Activated T-helper 1 cell treated with anti-CD3 and anti-CD28 coated beads, Interleukin-12 subunit alpha, Interleukin-12 subunit beta, Interleukin-2, Interleukin-4 antibody, amounts not matched to agents 30 ng/mL and 10 ng/mL and 1 ng/mL, durations not matched to agents 14 hours and 24 hours and 36 hours (primary cell): ENCODE measurements at regions of chr5 and their contacts with region 1.

Region 1: DNA sequence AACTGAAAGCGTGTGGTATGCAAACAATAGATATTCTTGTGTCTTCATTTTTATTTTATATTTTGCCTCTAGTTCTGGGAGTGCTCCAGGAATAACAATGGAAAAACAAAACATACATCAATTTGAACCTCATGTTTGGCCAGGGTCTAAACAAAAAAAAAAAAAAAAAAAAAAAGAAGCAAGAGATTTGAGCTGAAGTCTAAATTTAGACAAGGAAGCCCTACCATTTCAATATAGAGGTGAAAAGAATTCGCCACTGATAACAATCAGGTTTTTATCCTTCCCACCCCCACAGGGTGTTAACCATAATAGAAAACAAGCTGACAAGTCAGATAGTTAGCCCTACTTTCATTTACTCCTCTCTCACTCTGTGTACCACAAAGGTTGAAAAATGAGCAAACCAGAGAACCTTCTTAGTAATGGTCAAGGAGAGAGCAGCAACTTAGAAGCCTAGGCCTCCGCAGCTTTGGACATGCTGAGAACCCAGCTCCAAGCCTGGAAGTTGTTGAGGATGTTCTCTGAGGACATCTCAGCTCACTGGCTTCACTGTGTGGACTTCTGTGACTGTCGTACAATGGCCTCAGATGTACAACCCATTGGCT is 118.2 kb upstream of the HMHB1 start:
- DNase-seq: no peak
- H3K4me3 Mint-ChIP-seq: no peak overlapping the region
- H3K27ac Mint-ChIP-seq: peak overlapping the region; percentile 58
- H3K4me1 Mint-ChIP-seq: peaks cover 44% of the 10 kb centered on the region
- H3K27me3 Mint-ChIP-seq: no peaks in the 10 kb centered on the region

Region 2: GRCh38 chr5:143002459-143003328 is 691.1 kb before region 1 on chr5:
- intact Hi-C with region 1: loop called (anchors 5 kb)
- DNase-seq: peak; percentile 66
- H3K4me3 Mint-ChIP-seq: peak overlapping the region; percentile 75
- H3K27ac Mint-ChIP-seq: peak overlapping the region; percentile 98
- H3K4me1 Mint-ChIP-seq: peaks cover 89% of the 10 kb centered on the region
- H3K27me3 Mint-ChIP-seq: no peaks in the 10 kb centered on the region

Region 3: GRCh38 chr5:143222287-143223231 is 471.2 kb before region 1 on chr5:
- intact Hi-C with region 1: loop called (anchors 10 kb)
- DNase-seq: peak; percentile 59
- H3K4me3 Mint-ChIP-seq: peak overlapping the region; percentile 60
- H3K27ac Mint-ChIP-seq: peak overlapping the region; percentile 92
- H3K4me1 Mint-ChIP-seq: peaks cover 77% of the 10 kb centered on the region
- H3K27me3 Mint-ChIP-seq: no peaks in the 10 kb centered on the region

Region 4: GRCh38 chr5:143605403-143606005 is 88.2 kb before region 1 on chr5:
- intact Hi-C with region 1: loop called (anchors 2 kb)
- DNase-seq: peak; percentile 25
- H3K4me3 Mint-ChIP-seq: peak overlapping the region; percentile 56
- H3K27ac Mint-ChIP-seq: peak overlapping the region; percentile 91
- H3K4me1 Mint-ChIP-seq: peaks cover 38% of the 10 kb centered on the region
- H3K27me3 Mint-ChIP-seq: no peaks in the 10 kb centered on the region

Region 5: DNA sequence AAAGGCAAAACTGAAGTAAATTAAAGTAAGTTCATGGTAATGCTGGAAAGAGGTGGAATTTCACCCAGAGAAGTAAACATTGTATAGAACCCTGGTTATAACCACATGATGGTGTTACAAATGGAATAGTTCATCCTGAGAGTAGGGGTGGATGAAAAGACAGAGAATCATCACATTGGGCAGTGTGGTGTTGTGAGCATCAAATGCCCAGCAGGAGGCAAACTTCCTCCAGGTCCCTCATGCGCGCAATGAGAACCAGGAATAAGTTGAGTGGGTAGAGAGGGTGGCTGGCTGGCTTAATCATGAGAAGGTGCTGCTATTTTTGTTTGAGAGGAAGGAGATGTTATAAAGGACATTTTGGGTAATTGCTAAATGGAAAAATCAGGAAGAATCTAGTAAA is 45.1 kb before region 1 on chr5:
- intact Hi-C with region 1: loop called (anchors 2 kb)
- DNase-seq: no peak
- H3K4me3 Mint-ChIP-seq: no peak overlapping the region
- H3K27ac Mint-ChIP-seq: no peak overlapping the region
- H3K4me1 Mint-ChIP-seq: peaks cover 6% of the 10 kb centered on the region
- H3K27me3 Mint-ChIP-seq: no peaks in the 10 kb centered on the region

Region 6: DNA sequence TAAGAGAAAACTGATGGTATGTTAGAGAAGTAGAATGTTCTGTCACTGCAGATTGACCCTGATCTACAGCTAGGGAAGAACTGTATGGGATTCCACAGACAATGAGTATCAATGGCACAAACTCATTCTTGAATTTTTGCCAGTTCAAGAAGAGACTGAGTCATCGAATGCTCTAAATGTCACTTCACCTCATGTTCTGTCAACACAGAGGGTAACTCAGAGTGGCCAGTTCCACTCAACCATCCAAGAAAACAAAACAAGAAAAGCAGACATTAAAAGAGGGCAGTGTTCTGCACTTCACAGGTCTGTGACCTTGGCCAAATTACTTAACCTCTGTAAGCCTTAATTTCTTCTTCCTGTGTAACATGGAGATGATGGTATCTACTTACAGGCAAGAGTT is 14.0 kb before region 1 on chr5:
- intact Hi-C with region 1: loop called (anchors 2 kb)
- DNase-seq: no peak
- H3K4me3 Mint-ChIP-seq: no peak overlapping the region
- H3K27ac Mint-ChIP-seq: no peak overlapping the region
- H3K4me1 Mint-ChIP-seq: peaks cover 18% of the 10 kb centered on the region
- H3K27me3 Mint-ChIP-seq: no peaks in the 10 kb centered on the region

Region 7: GRCh38 chr5:143812085-143812705 is 118.4 kb after region 1 on chr5 and contains the start of gene HMHB1:
- intact Hi-C with region 1: loop called (anchors 5 kb)
- DNase-seq: no peak
- H3K4me3 Mint-ChIP-seq: peak within 1 kb of the TSS; percentile 60
- H3K27ac Mint-ChIP-seq: peak within 1 kb of the TSS; percentile 75
- H3K4me1 Mint-ChIP-seq: peaks cover 23% of the 10 kb centered on the region
- H3K27me3 Mint-ChIP-seq: no peaks in the 10 kb centered on the region
- total RNA-seq, gene HMHB1: 0.69 and 0.83 TPM in 2 replicates